Activated T-helper 2 cell treated with anti-CD3 and anti-CD28 coated beads, Interferon-gamma antibody, Interleukin-2, Interleukin-4, amounts not matched to agents 10 μg/mL and 5 μg/mL and 100 μg/mL, durations not matched to agents 14 hours and 24 hours and 36 hours (primary cell): ENCODE measurements at regions of chr3 and their contacts with region 1.

Region 1: DNA sequence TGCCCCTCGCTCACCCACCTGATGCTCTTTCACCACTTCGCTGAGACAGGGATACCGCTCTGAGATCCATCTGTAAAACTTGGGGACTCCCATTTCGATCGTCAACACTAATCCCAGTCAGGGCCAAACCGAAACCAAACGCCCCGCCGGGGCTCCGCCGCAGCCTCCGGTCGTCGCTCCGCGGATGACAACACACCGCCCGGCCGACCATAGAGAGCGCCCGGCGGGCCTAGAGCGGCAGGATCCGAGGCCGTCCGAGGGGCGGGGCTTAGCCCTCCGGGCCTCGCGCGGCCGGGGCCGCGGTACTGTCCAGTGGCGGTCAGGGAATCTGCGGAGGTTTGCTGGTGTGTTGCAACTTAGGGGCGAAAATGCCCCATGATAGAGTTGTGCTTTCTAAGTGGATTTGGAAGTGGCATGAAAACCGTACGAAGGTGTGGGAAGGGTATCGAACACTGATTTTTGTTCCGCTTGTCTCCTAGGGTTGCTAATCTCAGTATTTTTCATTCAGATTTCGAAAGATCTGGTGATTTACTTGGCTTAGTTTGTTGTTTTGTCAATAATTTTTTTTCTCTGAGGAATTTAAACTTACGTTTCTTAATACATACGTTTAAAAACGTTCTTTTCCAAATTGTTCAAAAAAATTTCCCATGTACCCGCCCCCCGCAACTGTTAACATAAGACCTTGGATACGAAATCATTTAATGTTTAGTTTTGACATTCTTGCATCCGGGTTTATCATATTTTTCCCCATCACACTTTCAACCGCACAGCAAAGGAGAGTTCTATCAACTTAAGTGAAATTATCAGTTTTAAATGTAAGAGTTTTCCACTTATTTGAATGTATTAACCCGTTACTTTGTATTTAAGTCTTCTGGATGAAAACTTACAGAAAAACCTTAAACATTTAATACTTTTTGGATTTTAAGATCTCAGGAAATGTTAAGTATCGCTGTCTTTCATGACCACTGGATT is at the start of gene XRN1:
- DNase-seq: peak; percentile 93
- H3K4me3 Mint-ChIP-seq: peak within 1 kb of the TSS; percentile 91
- H3K27ac Mint-ChIP-seq: peak within 1 kb of the TSS; percentile 96
- H3K4me1 Mint-ChIP-seq: peaks cover 21% of the 10 kb centered on the region
- H3K27me3 Mint-ChIP-seq: no peaks in the 10 kb centered on the region
- total RNA-seq, gene XRN1: 51.4 and 55.4 TPM in 2 replicates

Region 2: DNA sequence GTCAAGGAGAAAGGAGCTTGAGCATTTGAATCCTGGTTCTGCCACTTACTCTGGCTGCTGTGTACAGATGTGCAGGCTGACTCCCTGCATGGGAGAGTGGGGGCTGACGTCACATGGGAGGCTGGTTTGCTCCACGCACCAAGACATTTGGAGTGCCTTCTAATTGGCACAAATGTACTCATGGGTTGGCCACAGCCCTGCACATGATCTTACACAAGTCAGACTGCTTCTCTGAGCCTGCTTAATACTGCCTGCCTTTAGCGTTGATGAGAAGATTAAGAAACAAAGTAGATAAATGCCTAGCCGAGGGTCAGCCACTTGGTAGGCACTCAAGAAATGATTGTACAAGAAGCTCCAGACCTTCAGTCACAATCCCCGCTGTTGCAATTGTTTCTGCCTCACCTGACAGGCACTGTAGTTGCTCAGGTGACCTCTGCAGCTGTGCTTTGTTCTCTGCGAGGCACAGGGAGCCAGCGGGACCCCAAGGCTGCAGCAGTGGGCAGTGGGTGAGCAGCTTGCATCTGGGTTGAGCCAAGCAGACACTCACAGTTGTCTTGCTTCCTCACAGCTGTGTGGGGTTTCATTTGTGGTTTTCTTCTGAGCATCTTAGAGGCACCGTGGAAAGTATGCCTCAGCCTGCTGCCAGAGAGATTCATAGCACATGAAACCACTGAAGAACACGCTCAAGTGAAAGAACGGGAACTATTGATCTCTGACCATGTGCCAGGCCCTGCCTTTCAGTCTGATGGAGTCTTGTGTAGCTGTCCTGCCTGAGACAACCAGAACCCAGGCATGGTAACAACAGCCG is 651.9 kb before region 1 on chr3:
- intact Hi-C with region 1: loop called (anchors 5 kb)
- DNase-seq: peak; percentile 74
- H3K4me3 Mint-ChIP-seq: peak overlapping the region; percentile 81
- H3K27ac Mint-ChIP-seq: peak overlapping the region; percentile 99
- H3K4me1 Mint-ChIP-seq: peaks cover 44% of the 10 kb centered on the region
- H3K27me3 Mint-ChIP-seq: no peaks in the 10 kb centered on the region

Region 3: DNA sequence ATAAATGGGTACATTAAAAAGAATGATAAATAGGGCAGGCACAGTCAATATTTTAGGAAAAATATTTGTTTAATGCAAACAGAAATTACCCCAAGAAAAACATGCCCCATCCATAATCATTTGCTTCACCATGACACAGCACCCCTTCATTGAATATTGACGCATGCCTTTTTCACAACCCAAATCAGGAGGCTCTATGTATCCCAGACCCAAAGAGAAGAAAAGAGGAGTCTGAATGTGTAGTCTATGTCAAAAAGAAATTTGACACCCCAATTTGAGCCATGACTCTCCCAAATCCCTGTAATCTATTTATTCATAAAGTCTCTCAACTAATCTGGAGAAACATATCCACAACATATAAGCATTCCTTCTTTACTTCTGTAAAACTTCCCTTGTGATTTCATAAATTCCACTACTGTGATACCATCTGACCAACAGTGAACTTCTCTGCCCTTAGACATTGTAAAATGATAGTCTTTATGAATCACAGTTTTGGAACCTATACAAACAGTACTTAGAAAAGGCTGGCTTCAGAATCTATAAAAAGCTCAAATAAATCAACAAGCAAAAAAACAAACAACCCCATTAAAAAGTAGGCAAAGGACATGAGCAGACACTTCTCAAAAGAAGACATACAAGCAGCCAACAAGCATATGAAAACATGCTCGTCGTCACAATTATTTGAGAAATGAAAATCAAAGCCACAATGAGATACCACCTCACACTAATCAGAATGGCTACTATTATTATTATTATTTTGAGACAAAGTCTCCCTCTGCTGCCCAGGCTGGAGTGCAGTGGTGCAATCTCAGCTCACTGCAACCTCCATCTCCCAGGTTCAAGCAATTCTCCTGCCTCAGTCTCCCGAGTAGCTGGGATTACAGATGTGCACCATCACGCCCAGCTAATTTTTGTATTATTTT is 53.1 kb after region 1 on chr3:
- intact Hi-C with region 1: loop called (anchors 2 kb)
- DNase-seq: no peak
- H3K4me3 Mint-ChIP-seq: no peak overlapping the region
- H3K27ac Mint-ChIP-seq: peak overlapping the region; percentile 70
- H3K4me1 Mint-ChIP-seq: peaks cover 28% of the 10 kb centered on the region
- H3K27me3 Mint-ChIP-seq: no peaks in the 10 kb centered on the region

Region 4: GRCh38 chr3:142578327-142579223 is 130.4 kb after region 1 on chr3 and contains the start of gene ATR:
- intact Hi-C with region 1: loop called (anchors 1 kb)
- DNase-seq: peak; percentile 96
- H3K4me3 Mint-ChIP-seq: peak within 1 kb of the TSS; percentile 99
- H3K27ac Mint-ChIP-seq: peak within 1 kb of the TSS; percentile 96
- H3K4me1 Mint-ChIP-seq: peaks cover 38% of the 10 kb centered on the region
- H3K27me3 Mint-ChIP-seq: peaks cover 11% of the 10 kb centered on the region
- total RNA-seq, gene ATR: 29.1 and 32.8 TPM in 2 replicates

Region 5: GRCh38 chr3:143001369-143002082 is 553.4 kb after region 1 on chr3 and contains the start of gene U2SURP:
- intact Hi-C with region 1: loop called (anchors 1 kb)
- DNase-seq: peak; percentile 91
- H3K4me3 Mint-ChIP-seq: peak within 1 kb of the TSS; percentile 94
- H3K27ac Mint-ChIP-seq: peak within 1 kb of the TSS; percentile 96
- H3K4me1 Mint-ChIP-seq: peaks cover 22% of the 10 kb centered on the region
- H3K27me3 Mint-ChIP-seq: peaks cover 3% of the 10 kb centered on the region
- total RNA-seq, gene U2SURP: 176 TPM in 2 replicates